Thyroid gland (tissue), 4 donors: ENCODE measurements at regions of chrX and their contacts with region 1.

Region 1: DNA sequence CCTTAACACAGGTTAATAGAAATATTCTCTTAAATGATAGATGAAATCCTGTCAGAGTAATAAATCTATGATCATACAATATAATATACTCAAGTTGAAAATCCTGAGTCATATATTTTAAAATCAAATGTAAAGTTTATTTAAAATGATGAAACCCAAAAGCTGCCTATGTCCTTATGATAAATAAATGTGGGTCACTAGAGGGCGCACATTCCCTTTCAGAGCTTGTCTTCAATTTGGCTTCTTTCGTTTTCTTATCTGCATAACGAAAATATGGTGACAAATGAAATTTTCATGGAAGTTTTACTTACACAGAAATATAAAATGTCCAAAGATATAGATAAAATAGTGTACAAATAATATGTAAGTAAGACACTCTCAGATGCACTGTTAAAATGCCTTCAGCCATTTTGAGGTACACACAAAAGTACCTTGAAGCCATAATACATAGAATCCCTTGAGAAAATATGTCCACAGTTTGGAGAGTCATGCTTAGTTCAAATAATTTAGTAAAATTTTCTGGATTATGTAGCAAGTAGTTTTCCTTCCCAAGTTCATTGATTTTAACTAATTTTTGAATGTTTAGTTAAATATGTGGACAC is 680.4 kb downstream of the DMD start:
- DNase-seq: peak; percentile 2 to 5
- H3K4me3 ChIP-seq: no peak overlapping the region
- H3K27ac ChIP-seq: no peak overlapping the region
- H3K4me1 ChIP-seq: no peaks in the 10 kb centered on the region
- H3K27me3 ChIP-seq: no peaks in the 10 kb centered on the region
- CTCF ChIP-seq: peak in 5 of 6 experiments; percentile 34 to 67 (median 55)
- POLR2A ChIP-seq: no peak

Region 2: DNA sequence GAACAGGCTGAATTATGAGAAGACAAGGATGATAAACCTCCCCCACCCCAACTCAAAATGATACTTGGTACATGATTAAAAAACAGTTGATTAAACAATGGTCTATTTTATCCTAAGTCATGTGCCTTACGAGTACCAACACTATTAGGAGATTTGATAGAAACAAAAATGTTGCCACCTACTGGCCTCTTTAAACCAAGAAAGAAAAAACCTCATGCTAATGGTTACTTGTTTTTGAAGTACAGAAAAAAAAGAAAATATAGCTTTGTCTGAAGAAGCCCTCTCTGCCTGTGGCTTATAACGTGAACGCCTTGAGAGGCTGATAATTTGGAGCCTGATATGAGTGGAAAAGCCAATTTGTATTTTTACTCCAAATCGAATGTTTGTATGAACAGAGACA is 142.3 kb after region 1 on chrX:
- intact Hi-C with region 1: loop called (anchors 10 kb)
- DNase-seq: no peak
- H3K4me3 ChIP-seq: no peak overlapping the region
- H3K27ac ChIP-seq: no peak overlapping the region
- H3K4me1 ChIP-seq: no peaks in the 10 kb centered on the region
- H3K27me3 ChIP-seq: no peaks in the 10 kb centered on the region
- CTCF ChIP-seq: peak in 3 of 6 experiments; percentile 27 to 46 (median 37)
- POLR2A ChIP-seq: no peak